Activated CD8-positive, alpha-beta T cell treated with anti-CD3 and anti-CD28 coated beads, Interleukin-2, amount 10 ng/mL, durations not matched to agents 7 days and 5 days (primary cell): ENCODE measurements at regions of chr11 and their contacts with region 1.

Region 1: GRCh38 chr11:68199295-68199987 is 13.7 kb downstream of the KMT5B start:
- DNase-seq: no peak
- ATAC-seq: no peak
- H3K4me3 Mint-ChIP-seq: no peak overlapping the region
- H3K27ac Mint-ChIP-seq: no peak overlapping the region
- H3K4me1 Mint-ChIP-seq: peaks cover 10% of the 10 kb centered on the region
- H3K27me3 Mint-ChIP-seq: no peaks in the 10 kb centered on the region

Region 2: GRCh38 chr11:68066742-68067141 is 132.7 kb before region 1 on chr11:
- CTCF ChIA-PET with region 1: no interaction called
- POLR2A ChIA-PET with region 1: no interaction called
- DNase-seq: no peak
- ATAC-seq: no peak
- H3K4me3 Mint-ChIP-seq: no peak overlapping the region
- H3K27ac Mint-ChIP-seq: no peak overlapping the region
- H3K4me1 Mint-ChIP-seq: no peaks in the 10 kb centered on the region
- H3K27me3 Mint-ChIP-seq: no peaks in the 10 kb centered on the region

Region 3: DNA sequence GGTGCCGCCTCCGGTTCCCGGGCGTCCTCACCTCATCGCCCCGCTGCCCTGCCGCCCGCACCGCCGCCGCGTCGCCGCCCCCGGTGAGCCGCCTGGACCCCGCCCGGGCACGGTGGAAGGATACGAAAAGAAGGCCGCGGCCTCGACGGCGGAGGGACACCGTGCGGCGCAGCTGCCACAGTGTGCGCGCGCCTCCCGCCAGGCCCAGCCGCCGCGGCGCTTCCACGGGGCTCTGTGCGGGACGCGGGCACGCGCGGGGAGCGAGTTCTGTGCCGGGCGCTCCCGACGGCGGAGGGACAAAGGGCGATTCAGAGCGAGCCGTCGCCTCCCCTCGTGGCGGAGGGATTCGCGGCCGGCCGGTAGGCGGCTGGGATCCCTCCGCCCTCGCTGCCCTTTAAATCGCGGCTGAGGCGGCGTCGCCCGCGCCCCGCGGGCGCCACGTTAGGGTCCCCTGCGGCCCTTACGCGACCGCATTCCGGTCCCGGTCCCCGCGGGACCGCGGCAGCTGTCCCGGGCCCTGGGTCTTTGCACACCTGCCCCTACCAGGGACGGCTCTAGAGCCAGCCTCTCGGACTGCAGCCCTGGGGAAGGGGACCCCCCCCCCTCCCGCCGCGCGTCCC is 14.2 kb after region 1 on chr11:
- CTCF ChIA-PET with region 1: interaction called, 17 read pairs
- POLR2A ChIA-PET with region 1: no interaction called
- DNase-seq: peak; percentile 80
- ATAC-seq: peak; percentile 58
- H3K4me3 Mint-ChIP-seq: peak overlapping the region; percentile 69
- H3K27ac Mint-ChIP-seq: peak overlapping the region; percentile 85
- H3K4me1 Mint-ChIP-seq: peaks cover 33% of the 10 kb centered on the region
- H3K27me3 Mint-ChIP-seq: peaks cover 24% of the 10 kb centered on the region

Region 4: GRCh38 chr11:68321293-68322041 is 122.0 kb after region 1 on chr11:
- CTCF ChIA-PET with region 1: no interaction called
- POLR2A ChIA-PET with region 1: no interaction called
- DNase-seq: no peak
- ATAC-seq: no peak
- H3K4me3 Mint-ChIP-seq: no peak overlapping the region
- H3K27ac Mint-ChIP-seq: no peak overlapping the region
- H3K4me1 Mint-ChIP-seq: peaks cover 13% of the 10 kb centered on the region
- H3K27me3 Mint-ChIP-seq: no peaks in the 10 kb centered on the region

Region 5: GRCh38 chr11:68751004-68751856 is 551.8 kb after region 1 on chr11 and contains the start of gene TESMIN:
- CTCF ChIA-PET with region 1: no interaction called
- POLR2A ChIA-PET with region 1: no interaction called
- DNase-seq: peak; percentile 95
- ATAC-seq: peak; percentile 96
- H3K4me3 Mint-ChIP-seq: peak within 1 kb of the TSS; percentile 62
- H3K27ac Mint-ChIP-seq: no peak within 1 kb of the TSS
- H3K4me1 Mint-ChIP-seq: peaks cover 8% of the 10 kb centered on the region
- H3K27me3 Mint-ChIP-seq: peaks cover 3% of the 10 kb centered on the region
- total RNA-seq, gene TESMIN: 8.2 to 9.5 TPM